ENCODE measurements at regions of chr6 and their contacts with region 1.

Region 1: GRCh38 chr6:75893058-75893775 is 144.2 kb downstream of the MYO6 start:
- DNase-seq: peak; percentile 80
- ATAC-seq: peak; percentile 71
- H3K4me3 ChIP-seq: no peak overlapping the region
- H3K27ac ChIP-seq: no peak overlapping the region
- H3K4me1 ChIP-seq: no peaks in the 10 kb centered on the region
- H3K27me3 ChIP-seq: no peaks in the 10 kb centered on the region
- CTCF ChIP-seq: peak; percentile 72
- POLR2A ChIP-seq: no peak
- RAD21 ChIP-seq: peak; percentile 77

Region 2: GRCh38 chr6:75880305-75880704 is 12.9 kb before region 1 on chr6:
- CTCF ChIA-PET with region 1: interaction called, 10 read pairs
- POLR2A ChIA-PET with region 1: no interaction called
- dilution Hi-C with region 1: no loop called
- in situ Hi-C with region 1: no loop called
- intact Hi-C with region 1: no loop called
- DNase-seq: no peak
- ATAC-seq: no peak
- H3K4me3 ChIP-seq: no peak overlapping the region
- H3K27ac ChIP-seq: no peak overlapping the region
- H3K4me1 ChIP-seq: peaks cover 2% of the 10 kb centered on the region; the same call in 1 of the 2 replicates
- H3K27me3 ChIP-seq: no peaks in the 10 kb centered on the region
- CTCF ChIP-seq: no peak
- POLR2A ChIP-seq: no peak
- RAD21 ChIP-seq: no peak

Region 3: DNA sequence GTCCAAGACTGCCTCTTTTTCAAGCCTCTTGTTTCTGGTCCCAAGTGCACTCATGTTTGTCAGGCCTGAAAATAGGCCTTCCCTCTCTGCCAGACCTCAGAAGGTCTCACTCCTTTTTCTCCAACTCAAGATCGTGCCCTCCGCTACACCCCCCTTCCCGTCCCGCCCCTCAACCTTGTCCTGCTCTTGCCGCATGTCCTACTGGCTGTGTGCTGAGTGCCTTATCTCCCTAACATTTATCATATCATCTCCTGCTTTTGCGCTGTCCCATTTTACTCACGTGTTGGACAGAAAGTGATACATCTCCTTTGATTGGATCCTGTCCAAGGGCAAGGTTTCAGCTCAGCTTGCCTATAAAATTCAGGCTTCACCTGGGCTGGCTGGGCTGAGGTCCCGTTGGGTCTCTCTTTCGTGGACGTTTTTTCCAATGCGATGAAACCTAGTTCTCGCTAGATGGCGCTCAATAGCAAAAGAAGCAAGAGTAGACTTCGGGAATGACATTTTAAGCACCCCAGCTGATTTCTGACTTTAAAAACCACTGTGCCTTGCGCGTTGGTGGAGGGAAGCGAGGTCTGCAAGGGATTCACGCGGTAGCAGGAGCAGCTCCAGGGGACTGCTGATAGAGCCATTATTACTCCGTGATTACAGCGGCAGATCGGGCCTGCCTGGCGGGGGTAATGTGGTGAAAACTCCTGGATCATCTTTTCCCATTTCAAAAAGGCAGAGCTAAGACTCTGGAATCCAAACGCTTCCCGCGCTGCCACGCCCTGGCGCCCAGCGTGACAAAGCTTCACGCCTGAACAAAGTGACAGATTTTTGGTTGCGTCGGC is 41.6 kb after region 1 on chr6:
- CTCF ChIA-PET with region 1: interaction called, 5 read pairs
- POLR2A ChIA-PET with region 1: no interaction called
- dilution Hi-C with region 1: no loop called
- in situ Hi-C with region 1: no loop called
- intact Hi-C with region 1: loop called (anchors 2 kb)
- DNase-seq: peak; percentile 79
- ATAC-seq: peak; percentile 84
- H3K4me3 ChIP-seq: peak overlapping the region; percentile 42
- H3K27ac ChIP-seq: no peak overlapping the region
- H3K4me1 ChIP-seq: peaks cover 2% of the 10 kb centered on the region
- H3K27me3 ChIP-seq: peaks cover 11% of the 10 kb centered on the region; the same call in 1 of the 2 replicates
- CTCF ChIP-seq: peak; percentile 81
- POLR2A ChIP-seq: no peak
- RAD21 ChIP-seq: peak; percentile 75

Region 4: GRCh38 chr6:76682842-76683241 is 789.6 kb after region 1 on chr6:
- CTCF ChIA-PET with region 1: no interaction called
- POLR2A ChIA-PET with region 1: no interaction called
- dilution Hi-C with region 1: no loop called
- in situ Hi-C with region 1: no loop called
- intact Hi-C with region 1: loop called (anchors 5 kb)
- DNase-seq: peak; percentile 10
- ATAC-seq: no peak; the same call in 1 of the 2 replicates
- H3K4me3 ChIP-seq: no peak overlapping the region
- H3K27ac ChIP-seq: no peak overlapping the region
- H3K4me1 ChIP-seq: no peaks in the 10 kb centered on the region
- H3K27me3 ChIP-seq: no peaks in the 10 kb centered on the region
- CTCF ChIP-seq: peak; percentile 47
- POLR2A ChIP-seq: no peak
- RAD21 ChIP-seq: peak; percentile 20; the same call in 1 of the 2 replicates

Measured in IMR-90 (cell line).